ENCODE measurements at regions of chr20 and their contacts with region 1.

Region 1: DNA sequence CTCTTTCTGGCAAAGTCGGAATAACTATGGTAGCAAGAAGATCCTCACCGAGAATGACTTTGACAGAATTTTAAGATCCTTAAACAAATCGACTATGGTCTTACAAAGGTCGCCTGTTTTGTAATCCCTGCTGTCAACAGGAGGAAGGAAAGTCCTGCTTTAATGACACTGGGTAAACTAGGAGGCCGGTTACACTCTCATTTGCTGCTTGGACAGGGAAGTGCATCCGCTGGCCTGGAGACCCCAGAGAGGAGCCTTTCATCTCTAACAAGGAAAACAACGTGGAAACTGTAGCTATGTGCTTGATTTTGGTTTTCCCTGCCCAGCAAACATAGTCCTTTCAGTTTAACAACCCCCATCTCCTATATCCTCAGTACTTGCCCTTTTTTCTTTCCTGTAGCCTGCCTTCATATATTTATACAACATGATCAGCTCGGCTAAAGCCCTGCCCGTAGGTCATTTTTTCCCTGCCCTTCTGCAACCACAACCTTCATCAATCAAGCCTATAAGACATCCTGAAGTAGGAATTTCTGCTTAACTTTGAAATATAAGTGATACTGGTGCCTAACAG is 97.2 kb upstream of the RIN2 start:
- DNase-seq: no peak
- ATAC-seq: no peak
- H3K4me3 ChIP-seq: no peak overlapping the region
- H3K4me3 Mint-ChIP-seq: no peak overlapping the region
- H3K27ac ChIP-seq: no peak overlapping the region
- H3K27ac Mint-ChIP-seq: no peak overlapping the region
- H3K4me1 ChIP-seq: no peaks in the 10 kb centered on the region
- H3K4me1 Mint-ChIP-seq: peaks cover 0 to 9% (median 5%) of the 10 kb centered on the region in 3 donors
- H3K27me3 ChIP-seq: peaks cover 0 to 21% of the 10 kb centered on the region in 2 experiments
- H3K27me3 Mint-ChIP-seq: peaks cover 20 to 26% of the 10 kb centered on the region in 2 donors

Region 2: DNA sequence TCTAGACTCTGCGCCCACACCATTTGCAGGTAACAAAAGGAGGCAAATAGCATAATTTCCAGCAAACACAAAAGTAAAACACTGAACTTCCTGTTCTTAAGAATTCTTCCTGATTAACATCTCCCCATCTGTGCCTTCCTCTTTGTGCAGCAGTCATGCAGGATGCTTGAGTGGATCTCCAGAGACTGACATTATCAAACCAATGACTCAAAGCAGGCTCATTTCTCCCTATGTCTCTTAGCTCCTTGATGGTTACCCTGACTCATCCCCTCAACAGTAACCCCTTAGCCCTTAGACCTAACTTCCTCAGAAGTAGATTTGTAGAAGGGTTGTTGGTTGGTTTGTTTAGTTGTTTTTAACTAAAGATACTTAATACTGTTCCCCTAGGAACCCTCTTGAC is 39.8 kb before region 1 on chr20:
- CTCF ChIA-PET with region 1: interaction called in 1 of 2 experiments, 13 read pairs
- POLR2A ChIA-PET with region 1: no interaction called
- DNase-seq: no peak
- ATAC-seq: no peak
- H3K4me3 ChIP-seq: no peak overlapping the region
- H3K4me3 Mint-ChIP-seq: no peak overlapping the region
- H3K27ac ChIP-seq: no peak overlapping the region
- H3K27ac Mint-ChIP-seq: no peak overlapping the region
- H3K4me1 ChIP-seq: no peaks in the 10 kb centered on the region
- H3K4me1 Mint-ChIP-seq: no peaks in the 10 kb centered on the region
- H3K27me3 ChIP-seq: peaks cover 0 to 3% of the 10 kb centered on the region in 2 experiments
- H3K27me3 Mint-ChIP-seq: peaks cover 4 to 27% of the 10 kb centered on the region in 2 donors

Region 3: DNA sequence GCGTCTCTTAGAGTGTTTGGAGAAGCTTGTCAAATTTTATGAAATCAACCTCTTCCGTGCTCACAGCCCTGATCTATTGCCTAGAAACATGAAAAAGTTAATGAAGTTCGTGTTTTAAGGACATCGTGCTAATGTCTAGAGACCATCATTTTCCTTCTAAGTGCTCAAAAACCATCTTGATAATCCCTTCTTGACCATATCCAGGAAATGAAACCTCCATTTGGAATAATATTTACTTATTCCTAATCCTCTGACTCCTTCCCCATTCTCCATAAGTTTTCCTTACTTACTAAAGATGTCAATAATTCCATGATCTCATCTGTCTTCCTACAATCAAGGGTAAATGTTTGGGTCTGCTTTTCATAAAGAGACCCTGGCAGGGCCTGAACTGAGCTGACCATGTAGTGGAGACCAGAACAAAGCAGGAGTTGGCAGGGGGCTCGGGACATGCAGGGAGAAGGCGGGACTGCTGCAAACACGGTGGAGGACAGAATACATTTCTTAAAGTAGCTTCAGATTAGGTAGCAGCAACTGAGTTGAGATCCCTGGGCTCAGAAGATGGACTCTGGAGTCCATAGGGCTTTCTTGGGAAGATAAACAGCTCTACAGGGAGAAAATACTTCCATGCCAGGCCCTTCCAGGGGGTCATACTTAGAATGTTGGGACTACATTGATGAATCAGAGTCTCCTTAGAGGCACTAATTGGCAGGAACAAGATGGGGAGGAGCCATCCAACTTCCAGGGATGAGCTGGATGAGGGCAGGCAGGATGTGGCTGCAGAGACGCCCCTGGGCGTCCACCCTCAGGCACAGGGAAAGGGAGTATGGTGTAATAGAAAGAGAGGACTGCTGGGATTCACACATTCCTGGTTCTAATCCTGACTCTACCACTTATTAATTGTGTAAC is 197.8 kb after region 1 on chr20:
- CTCF ChIA-PET with region 1: no interaction called
- POLR2A ChIA-PET with region 1: no interaction called
- DNase-seq: no peak
- ATAC-seq: no peak
- H3K4me3 ChIP-seq: no peak overlapping the region
- H3K4me3 Mint-ChIP-seq: no peak overlapping the region
- H3K27ac ChIP-seq: no peak overlapping the region
- H3K27ac Mint-ChIP-seq: no peak overlapping the region
- H3K4me1 ChIP-seq: no peaks in the 10 kb centered on the region
- H3K4me1 Mint-ChIP-seq: no peaks in the 10 kb centered on the region
- H3K27me3 ChIP-seq: peaks cover 0 to 2% of the 10 kb centered on the region in 2 experiments
- H3K27me3 Mint-ChIP-seq: peaks cover 14% of the 10 kb centered on the region in 2 donors